T-cell (primary cell): ENCODE measurements at regions of chr14 and their contacts with region 1.

Region 1: DNA sequence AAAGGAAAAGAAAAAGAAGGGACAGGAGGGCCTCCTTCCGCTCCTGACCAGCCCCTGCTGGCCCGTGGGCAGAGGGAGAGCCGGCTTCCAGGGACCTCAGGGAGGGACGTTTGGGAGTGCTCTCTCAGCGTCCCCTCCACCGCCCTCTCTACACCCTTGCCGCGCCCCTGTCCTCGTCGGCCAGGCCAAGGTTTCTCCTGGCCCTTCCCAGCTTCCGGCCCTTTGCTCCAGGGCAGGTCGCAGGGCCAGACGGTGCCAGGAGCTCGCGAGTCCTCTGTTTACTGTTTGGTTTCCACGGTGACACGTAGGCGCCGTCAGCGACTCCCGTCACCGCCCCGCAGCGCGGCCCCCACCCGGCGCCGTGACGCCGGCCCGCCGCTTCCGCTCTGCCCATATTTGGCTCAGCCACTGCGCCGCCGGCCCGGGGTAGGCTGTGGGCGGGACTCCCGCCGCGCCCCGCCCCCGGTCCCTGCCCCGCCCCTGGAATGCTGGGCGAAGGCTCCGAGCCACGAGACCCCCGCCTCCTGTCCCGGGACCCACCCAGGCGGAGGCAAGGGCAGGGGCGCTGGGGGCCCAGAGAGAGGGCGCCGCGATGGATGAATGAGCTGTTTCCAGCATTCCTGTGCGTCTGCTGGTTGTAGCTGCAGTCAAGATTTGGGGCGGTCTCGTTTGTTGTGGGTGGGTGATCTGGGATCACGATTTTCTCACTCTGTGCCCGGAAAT is 15.5 kb downstream of the FOS start:
- DNase-seq: peak; percentile 87 to 99 (median 92)
- ATAC-seq: peak; percentile 80 to 97 (median 96)
- H3K4me3 ChIP-seq: peak overlapping the region; percentile 66 to 70
- H3K4me3 Mint-ChIP-seq: peak overlapping the region; percentile 79 to 92 (median 88)
- H3K27ac ChIP-seq: peak overlapping the region; percentile 96
- H3K27ac Mint-ChIP-seq: peak overlapping the region; percentile 85 to 90
- H3K4me1 ChIP-seq: peaks cover 12 to 32% of the 10 kb centered on the region in 2 experiments
- H3K4me1 Mint-ChIP-seq: peaks cover 13 to 25% (median 23%) of the 10 kb centered on the region in 3 donors
- H3K27me3 ChIP-seq: peaks cover 0 to 7% of the 10 kb centered on the region in 2 experiments
- H3K27me3 Mint-ChIP-seq: no peaks in the 10 kb centered on the region

Region 2: GRCh38 chr14:75126679-75127473 is 167.2 kb before region 1 on chr14 and contains the start of gene NEK9:
- CTCF ChIA-PET with region 1: interaction called, 9 to 14 read pairs
- POLR2A ChIA-PET with region 1: interaction called, 4 to 11 read pairs
- DNase-seq: peak; percentile 77 to 93 (median 87)
- ATAC-seq: peak; percentile 90 to 93 (median 92)
- H3K4me3 ChIP-seq: peak within 1 kb of the TSS; percentile 36 to 87
- H3K4me3 Mint-ChIP-seq: peak within 1 kb of the TSS; percentile 95 to 97 (median 96)
- H3K27ac ChIP-seq: peak within 1 kb of the TSS; percentile 92
- H3K27ac Mint-ChIP-seq: peak within 1 kb of the TSS; percentile 96
- H3K4me1 ChIP-seq: peaks cover 14 to 34% of the 10 kb centered on the region in 2 experiments
- H3K4me1 Mint-ChIP-seq: peaks cover 44 to 52% (median 45%) of the 10 kb centered on the region in 3 donors
- H3K27me3 ChIP-seq: no peaks in the 10 kb centered on the region
- H3K27me3 Mint-ChIP-seq: no peaks in the 10 kb centered on the region
- total RNA-seq, gene NEK9: 78.9 to 121 (median 117) TPM

Region 3: GRCh38 chr14:75153295-75153694 is 140.8 kb before region 1 on chr14:
- CTCF ChIA-PET with region 1: interaction called in 1 of 2 experiments, 11 read pairs
- POLR2A ChIA-PET with region 1: interaction called in 1 of 2 experiments, 3 read pairs
- DNase-seq: no peak
- ATAC-seq: no peak
- H3K4me3 ChIP-seq: no peak overlapping the region
- H3K4me3 Mint-ChIP-seq: no peak overlapping the region
- H3K27ac ChIP-seq: no peak overlapping the region
- H3K27ac Mint-ChIP-seq: no peak overlapping the region
- H3K4me1 ChIP-seq: peaks cover 0 to 14% of the 10 kb centered on the region in 2 experiments
- H3K4me1 Mint-ChIP-seq: peaks cover 44 to 55% (median 49%) of the 10 kb centered on the region in 3 donors
- H3K27me3 ChIP-seq: no peaks in the 10 kb centered on the region
- H3K27me3 Mint-ChIP-seq: no peaks in the 10 kb centered on the region

Region 4: DNA sequence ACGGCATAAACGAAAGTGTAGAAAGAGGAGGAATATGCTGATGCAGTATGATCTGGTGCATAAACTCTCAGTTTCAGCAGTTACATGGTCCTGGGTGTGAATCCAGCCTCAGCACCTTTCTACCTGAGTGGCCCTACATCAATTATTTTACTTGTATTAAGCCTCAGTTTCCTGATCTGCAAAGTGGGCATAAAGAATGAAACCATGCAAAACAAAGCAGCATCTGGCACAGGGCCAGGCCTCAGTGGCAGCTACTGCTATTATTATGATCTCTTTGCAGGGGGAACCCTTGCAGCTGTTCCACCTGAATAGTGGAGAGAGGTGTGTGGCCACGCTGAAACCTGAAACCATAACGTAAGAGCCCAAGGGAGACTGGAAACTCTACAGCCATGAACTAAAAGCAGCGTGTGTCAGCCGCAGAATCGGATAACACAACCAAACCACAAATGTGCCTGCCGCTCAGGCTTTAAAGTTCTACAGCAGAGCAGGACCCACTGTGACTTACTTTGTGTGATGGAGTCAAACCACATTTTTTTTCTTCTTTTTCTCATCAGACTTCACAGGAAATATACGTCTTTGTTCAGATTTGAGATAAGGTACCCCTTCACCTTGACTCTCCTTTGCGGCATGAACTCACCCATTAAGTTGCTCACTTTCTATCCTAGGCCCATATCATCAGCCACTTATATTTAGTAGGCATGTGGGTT is 44.7 kb before region 1 on chr14:
- CTCF ChIA-PET with region 1: interaction called, 3 to 9 read pairs
- POLR2A ChIA-PET with region 1: interaction called, 7 to 10 read pairs
- DNase-seq: peak; percentile 47 to 96 (median 85)
- ATAC-seq: peak; percentile 80 to 89 (median 88)
- H3K4me3 ChIP-seq: peak overlapping the region; percentile 20 to 29
- H3K4me3 Mint-ChIP-seq: peak overlapping the region; percentile 43 to 72 (median 44)
- H3K27ac ChIP-seq: peak overlapping the region; percentile 90
- H3K27ac Mint-ChIP-seq: peak overlapping the region; percentile 85 to 88
- H3K4me1 ChIP-seq: peaks cover 45 to 64% of the 10 kb centered on the region in 2 experiments
- H3K4me1 Mint-ChIP-seq: peaks cover 59 to 68% (median 66%) of the 10 kb centered on the region in 3 donors
- H3K27me3 ChIP-seq: peaks cover 0 to 2% of the 10 kb centered on the region in 2 experiments
- H3K27me3 Mint-ChIP-seq: no peaks in the 10 kb centered on the region

Region 5: DNA sequence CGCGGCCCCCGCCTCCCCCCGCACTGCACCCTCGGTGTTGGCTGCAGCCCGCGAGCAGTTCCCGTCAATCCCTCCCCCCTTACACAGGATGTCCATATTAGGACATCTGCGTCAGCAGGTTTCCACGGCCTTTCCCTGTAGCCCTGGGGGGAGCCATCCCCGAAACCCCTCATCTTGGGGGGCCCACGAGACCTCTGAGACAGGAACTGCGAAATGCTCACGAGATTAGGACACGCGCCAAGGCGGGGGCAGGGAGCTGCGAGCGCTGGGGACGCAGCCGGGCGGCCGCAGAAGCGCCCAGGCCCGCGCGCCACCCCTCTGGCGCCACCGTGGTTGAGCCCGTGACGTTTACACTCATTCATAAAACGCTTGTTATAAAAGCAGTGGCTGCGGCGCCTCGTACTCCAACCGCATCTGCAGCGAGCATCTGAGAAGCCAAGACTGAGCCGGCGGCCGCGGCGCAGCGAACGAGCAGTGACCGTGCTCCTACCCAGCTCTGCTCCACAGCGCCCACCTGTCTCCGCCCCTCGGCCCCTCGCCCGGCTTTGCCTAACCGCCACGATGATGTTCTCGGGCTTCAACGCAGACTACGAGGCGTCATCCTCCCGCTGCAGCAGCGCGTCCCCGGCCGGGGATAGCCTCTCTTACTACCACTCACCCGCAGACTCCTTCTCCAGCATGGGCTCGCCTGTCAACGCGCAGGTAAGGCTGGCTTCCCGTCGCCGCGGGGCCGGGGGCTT is 15.5 kb before region 1 on chr14 and contains the start of gene FOS:
- CTCF ChIA-PET with region 1: interaction called, 3 to 9 read pairs
- POLR2A ChIA-PET with region 1: interaction called, 28 to 46 read pairs
- DNase-seq: peak; percentile 77 to 97 (median 91)
- ATAC-seq: peak; percentile 76 to 88 (median 87)
- H3K4me3 ChIP-seq: peak within 1 kb of the TSS; percentile 77 to 94
- H3K4me3 Mint-ChIP-seq: peak within 1 kb of the TSS; percentile 83 to 95 (median 92)
- H3K27ac ChIP-seq: peak within 1 kb of the TSS; percentile 68
- H3K27ac Mint-ChIP-seq: peak within 1 kb of the TSS; percentile 86 to 96
- H3K4me1 ChIP-seq: peaks cover 26 to 61% of the 10 kb centered on the region in 2 experiments
- H3K4me1 Mint-ChIP-seq: peaks cover 57 to 83% (median 77%) of the 10 kb centered on the region in 3 donors
- H3K27me3 ChIP-seq: peaks cover 0 to 50% of the 10 kb centered on the region in 2 experiments
- H3K27me3 Mint-ChIP-seq: peaks cover 8 to 15% of the 10 kb centered on the region in 2 donors
- total RNA-seq, gene FOS: 20.4 to 2,951 (median 27.1) TPM